AG04450 (cell line): ENCODE measurements at regions of chr12 and their contacts with region 1.

Region 1: DNA sequence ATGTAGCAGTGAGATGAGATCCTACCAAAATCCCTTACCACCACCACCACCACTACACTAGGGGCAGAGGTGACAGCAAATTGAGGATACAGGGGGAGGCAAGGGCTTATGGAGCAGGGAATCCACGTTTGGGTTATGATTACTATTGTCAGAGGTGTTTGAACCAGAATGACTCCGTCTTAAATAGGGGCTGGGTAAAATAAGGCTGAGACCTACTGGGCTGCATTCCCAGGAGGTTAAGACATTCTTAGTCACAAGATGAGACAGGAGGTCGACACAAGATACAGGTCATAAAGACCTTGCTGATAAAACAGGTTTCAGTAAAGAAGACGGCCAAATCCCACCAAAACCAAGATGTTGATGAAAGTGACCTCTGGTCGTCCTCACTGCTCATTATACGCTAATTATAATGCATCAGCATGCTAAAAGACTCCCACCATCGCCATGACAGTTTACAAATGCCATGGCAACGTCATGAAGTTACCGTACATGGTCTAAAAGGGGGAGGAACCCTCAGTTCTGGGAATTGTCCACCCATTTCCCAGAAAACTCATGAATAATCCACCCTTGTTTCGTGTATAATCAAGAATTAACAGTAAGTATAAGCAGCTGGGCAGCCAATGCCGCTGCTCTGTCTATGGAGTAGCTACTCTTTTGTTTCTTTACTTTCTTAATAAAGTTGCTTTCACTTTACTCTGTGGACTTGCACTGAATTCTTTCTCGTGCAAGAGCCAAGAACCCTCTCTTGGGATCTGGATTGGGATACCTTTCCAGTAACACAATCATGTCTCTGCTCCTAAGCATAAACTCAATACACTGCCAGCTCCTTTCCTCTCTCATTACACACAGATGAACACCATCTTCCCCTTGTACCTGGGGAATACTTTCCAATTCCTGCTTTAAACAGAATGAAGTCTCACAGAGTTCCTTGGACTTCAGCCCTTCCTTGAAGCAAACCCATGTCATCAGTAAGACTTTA is 16.7 kb upstream of the CRY1 start:
- DNase-seq: no peak
- H3K4me3 ChIP-seq: no peak overlapping the region
- H3K27ac ChIP-seq: no peak overlapping the region
- H3K27me3 ChIP-seq: peaks cover 13% of the 10 kb centered on the region
- CTCF ChIP-seq: no peak

Region 2: GRCh38 chr12:106926657-106927056 is 183.4 kb before region 1 on chr12:
- CTCF ChIA-PET with region 1: no interaction called
- POLR2A ChIA-PET with region 1: no interaction called
- DNase-seq: no peak
- H3K4me3 ChIP-seq: no peak overlapping the region
- H3K27ac ChIP-seq: no peak overlapping the region
- H3K27me3 ChIP-seq: peaks cover 2% of the 10 kb centered on the region
- CTCF ChIP-seq: no peak

Region 3: GRCh38 chr12:107079172-107080011 is 30.6 kb before region 1 on chr12:
- CTCF ChIA-PET with region 1: interaction called, 16 read pairs
- POLR2A ChIA-PET with region 1: no interaction called
- DNase-seq: no peak
- H3K4me3 ChIP-seq: no peak overlapping the region
- H3K27ac ChIP-seq: no peak overlapping the region
- H3K27me3 ChIP-seq: no peaks in the 10 kb centered on the region
- CTCF ChIP-seq: peak; percentile 63